Posterior vena cava (tissue), 2 donors: ENCODE measurements at regions of chr7 and their contacts with region 1.

Region 1: DNA sequence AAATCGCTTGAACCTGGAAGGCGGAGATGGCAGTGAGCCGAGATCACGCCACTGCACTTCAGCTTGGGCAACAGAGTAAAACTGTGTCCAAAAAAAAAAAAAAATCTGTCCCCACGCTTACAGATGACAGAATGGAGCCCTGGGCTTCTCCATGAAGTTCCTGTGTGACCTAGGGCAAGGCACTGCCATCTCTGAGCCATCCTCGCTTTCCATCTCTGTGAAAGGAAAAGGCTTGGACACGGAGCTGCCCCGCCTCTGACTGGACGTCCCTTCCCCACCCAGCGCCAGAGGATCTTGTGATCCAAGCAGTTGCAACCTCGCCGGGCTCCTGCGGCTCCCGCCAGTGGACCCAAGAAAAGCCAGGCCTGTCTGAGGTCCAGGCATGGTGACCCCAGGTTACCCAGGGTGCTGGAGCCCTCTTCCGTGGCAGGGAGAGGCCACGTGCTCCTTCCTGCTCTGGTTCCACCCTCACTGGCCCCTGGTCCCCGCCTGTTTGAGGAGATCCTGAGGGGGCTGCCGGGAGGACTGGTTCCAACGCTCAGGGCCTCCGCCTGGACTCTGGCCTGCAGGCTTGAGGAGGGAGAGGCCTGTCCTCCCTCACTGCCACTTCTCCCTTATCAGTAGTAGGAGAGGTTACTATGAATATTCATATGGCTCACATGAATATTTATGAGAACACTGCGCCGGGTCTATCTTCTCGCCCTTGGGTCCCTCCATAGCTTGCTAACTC is 25.6 kb upstream of the ELFN1 start:
- DNase-seq: no peak

Region 2: GRCh38 chr7:1609023-1609422 is 35.5 kb before region 1 on chr7:
- intact Hi-C with region 1: loop called in 1 of 2 experiments (anchors 1 kb)
- DNase-seq: no peak

Region 3: DNA sequence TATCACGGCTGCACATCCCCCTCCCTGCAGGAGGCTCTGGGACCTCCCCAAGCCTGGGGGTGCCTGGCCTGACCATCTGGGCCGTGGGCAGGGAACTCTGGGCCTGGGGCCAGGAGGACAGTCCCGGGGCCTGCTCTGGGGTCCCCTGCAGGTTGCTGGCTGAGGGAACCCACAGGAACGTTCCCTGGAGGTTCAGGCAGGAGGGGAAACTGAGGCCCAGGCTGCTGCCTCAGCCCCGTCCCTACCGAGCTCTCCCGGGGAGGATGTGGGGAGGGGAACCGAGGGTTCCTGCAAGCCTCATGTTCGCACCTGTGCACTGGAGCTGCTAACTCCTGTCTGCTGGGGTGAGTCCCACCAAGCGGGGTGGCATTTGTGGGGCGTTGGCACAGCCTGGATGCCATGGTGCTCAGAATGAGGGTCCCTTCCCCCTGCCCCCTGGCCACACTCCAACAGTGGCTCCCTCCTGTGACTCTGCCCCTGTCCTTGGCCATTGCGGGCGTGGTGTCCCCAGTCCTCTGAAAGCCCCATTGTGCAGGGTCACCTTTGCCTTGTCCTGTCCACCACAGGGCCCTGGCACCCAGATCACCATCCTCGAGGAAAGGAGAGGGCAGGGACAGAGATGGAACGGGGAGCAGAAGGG is 34.9 kb after region 1 on chr7:
- intact Hi-C with region 1: no loop called
- DNase-seq: no peak